ENCODE measurements at regions of chr18 and their contacts with region 1.

Region 1: GRCh38 chr18:22563098-22563707 is 145.5 kb upstream of the CTAGE1 start:
- DNase-seq: peak; percentile 68 to 84 (median 74)
- ATAC-seq: peak; percentile 78
- H3K4me3 ChIP-seq: no peak overlapping the region
- H3K27ac ChIP-seq: no peak overlapping the region
- H3K4me1 ChIP-seq: peaks cover 9 to 16% of the 10 kb centered on the region in 2 experiments
- H3K27me3 ChIP-seq: peaks cover 0 to 6% of the 10 kb centered on the region in 2 experiments; a peak in 2 of 5 replicates
- CTCF ChIP-seq: peak; percentile 85 to 93 (median 88)
- EP300 ChIP-seq: no peak
- POLR2A ChIP-seq: no peak
- RAD21 ChIP-seq: peak; percentile 97 to 100

Region 2: DNA sequence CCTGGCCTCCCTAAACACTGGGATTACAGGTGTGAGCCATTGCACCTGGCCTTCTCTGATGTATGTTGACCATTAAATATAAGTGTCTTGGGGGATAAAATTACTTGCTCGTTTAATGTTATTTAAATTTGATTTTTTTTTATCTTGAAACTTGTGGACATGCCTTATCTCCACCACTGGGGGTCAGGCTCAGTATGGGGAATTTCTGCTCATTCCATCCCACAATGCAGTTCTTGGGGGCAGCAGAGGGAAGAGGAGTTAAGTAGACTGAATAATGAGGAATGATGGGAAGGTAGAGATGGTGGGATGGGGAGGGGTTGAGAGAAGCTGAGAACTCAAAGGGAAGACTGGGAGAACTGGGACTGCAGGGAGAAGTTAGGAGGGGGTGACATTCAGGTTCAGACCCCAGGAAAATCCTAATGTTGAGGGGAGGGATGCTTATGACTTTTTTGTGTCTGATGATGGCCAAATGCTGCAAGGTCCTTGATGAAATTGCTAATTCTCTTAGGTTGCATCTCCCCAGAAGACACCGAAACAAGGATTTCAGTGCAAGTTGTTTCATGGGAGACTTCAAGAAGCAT is 648.4 kb before region 1 on chr18:
- CTCF ChIA-PET with region 1: no interaction called
- POLR2A ChIA-PET with region 1: no interaction called
- in situ Hi-C with region 1: loop called (anchors 25 kb)
- intact Hi-C with region 1: loop called (anchors 5 kb)
- DNase-seq: peak; percentile 26 to 46 (median 36)
- ATAC-seq: peak; percentile 70
- H3K4me3 ChIP-seq: no peak overlapping the region
- H3K27ac ChIP-seq: no peak overlapping the region
- H3K4me1 ChIP-seq: no peaks in the 10 kb centered on the region
- H3K27me3 ChIP-seq: peaks cover 1 to 8% of the 10 kb centered on the region in 2 experiments; a peak in 3 of 5 replicates
- CTCF ChIP-seq: peak; percentile 69 to 77 (median 69)
- EP300 ChIP-seq: no peak
- POLR2A ChIP-seq: no peak
- RAD21 ChIP-seq: peak in 1 of 2 experiments; percentile 74; a peak in 3 of 4 replicates

Region 3: GRCh38 chr18:22279741-22280452 is 283.3 kb before region 1 on chr18:
- CTCF ChIA-PET with region 1: no interaction called
- POLR2A ChIA-PET with region 1: no interaction called
- in situ Hi-C with region 1: no loop called
- intact Hi-C with region 1: no loop called
- DNase-seq: no peak
- ATAC-seq: no peak
- H3K4me3 ChIP-seq: no peak overlapping the region
- H3K27ac ChIP-seq: no peak overlapping the region
- H3K4me1 ChIP-seq: no peaks in the 10 kb centered on the region
- H3K27me3 ChIP-seq: peaks cover 12 to 21% of the 10 kb centered on the region in 2 experiments; a peak in 4 of 5 replicates
- CTCF ChIP-seq: no peak
- EP300 ChIP-seq: no peak
- POLR2A ChIP-seq: no peak
- RAD21 ChIP-seq: no peak

Region 4: DNA sequence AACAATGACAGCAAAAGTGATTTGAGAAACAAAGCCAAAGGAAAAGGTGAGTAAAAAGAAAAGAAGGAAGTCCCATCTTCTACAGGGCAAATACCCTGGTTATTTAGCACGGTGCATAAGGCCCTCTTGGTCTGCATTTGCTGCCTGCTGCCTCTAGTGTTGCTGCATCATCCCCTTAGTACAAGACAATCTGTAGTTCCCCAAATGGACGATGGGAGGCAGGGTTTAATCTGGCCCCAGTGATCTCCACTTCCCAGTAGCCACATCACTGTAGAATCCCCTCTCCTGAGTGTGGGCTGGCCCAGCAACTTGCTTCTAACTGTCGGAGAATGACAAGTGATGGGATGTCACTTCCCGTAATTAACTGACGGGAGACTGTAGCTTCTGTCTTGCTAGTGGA is 230.6 kb before region 1 on chr18:
- CTCF ChIA-PET with region 1: interaction called, 3 read pairs
- POLR2A ChIA-PET with region 1: no interaction called
- in situ Hi-C with region 1: no loop called
- intact Hi-C with region 1: loop called (anchors 1 kb)
- DNase-seq: peak; percentile 55 to 59 (median 55)
- ATAC-seq: peak; percentile 98
- H3K4me3 ChIP-seq: no peak overlapping the region
- H3K27ac ChIP-seq: no peak overlapping the region
- H3K4me1 ChIP-seq: no peaks in the 10 kb centered on the region
- H3K27me3 ChIP-seq: peaks cover 3 to 16% of the 10 kb centered on the region in 2 experiments; a peak in 3 of 5 replicates
- CTCF ChIP-seq: peak; percentile 73 to 97 (median 88)
- EP300 ChIP-seq: no peak
- POLR2A ChIP-seq: no peak
- RAD21 ChIP-seq: peak; percentile 67 to 81

Region 5: GRCh38 chr18:22451796-22452195 is 111.4 kb before region 1 on chr18:
- CTCF ChIA-PET with region 1: no interaction called
- POLR2A ChIA-PET with region 1: no interaction called
- in situ Hi-C with region 1: no loop called
- intact Hi-C with region 1: loop called (anchors 5 kb)
- DNase-seq: peak in 3 of 4 experiments; percentile 32 to 64 (median 40)
- ATAC-seq: peak; percentile 69
- H3K4me3 ChIP-seq: peak overlapping the region; percentile 16
- H3K27ac ChIP-seq: peak overlapping the region; percentile 86
- H3K4me1 ChIP-seq: peaks cover 6 to 16% of the 10 kb centered on the region in 2 experiments; a peak in 3 of 5 replicates
- H3K27me3 ChIP-seq: peaks cover 0 to 1% of the 10 kb centered on the region in 2 experiments; a peak in 1 of 5 replicates
- CTCF ChIP-seq: peak in 1 of 3 experiments; percentile 23; a peak in 1 of 6 replicates
- EP300 ChIP-seq: no peak
- POLR2A ChIP-seq: no peak
- RAD21 ChIP-seq: peak in 1 of 2 experiments; percentile 25; a peak in 1 of 4 replicates

Region 6: GRCh38 chr18:22489704-22490103 is 73.5 kb before region 1 on chr18:
- CTCF ChIA-PET with region 1: no interaction called
- POLR2A ChIA-PET with region 1: no interaction called
- in situ Hi-C with region 1: no loop called
- intact Hi-C with region 1: loop called (anchors 2 kb)
- DNase-seq: peak in 1 of 4 experiments; percentile 13
- ATAC-seq: no peak
- H3K4me3 ChIP-seq: no peak overlapping the region
- H3K27ac ChIP-seq: no peak overlapping the region
- H3K4me1 ChIP-seq: peaks cover 0 to 12% of the 10 kb centered on the region in 2 experiments; a peak in 3 of 5 replicates
- H3K27me3 ChIP-seq: no peaks in the 10 kb centered on the region
- CTCF ChIP-seq: no peak
- EP300 ChIP-seq: no peak
- POLR2A ChIP-seq: no peak
- RAD21 ChIP-seq: no peak

Region 7: DNA sequence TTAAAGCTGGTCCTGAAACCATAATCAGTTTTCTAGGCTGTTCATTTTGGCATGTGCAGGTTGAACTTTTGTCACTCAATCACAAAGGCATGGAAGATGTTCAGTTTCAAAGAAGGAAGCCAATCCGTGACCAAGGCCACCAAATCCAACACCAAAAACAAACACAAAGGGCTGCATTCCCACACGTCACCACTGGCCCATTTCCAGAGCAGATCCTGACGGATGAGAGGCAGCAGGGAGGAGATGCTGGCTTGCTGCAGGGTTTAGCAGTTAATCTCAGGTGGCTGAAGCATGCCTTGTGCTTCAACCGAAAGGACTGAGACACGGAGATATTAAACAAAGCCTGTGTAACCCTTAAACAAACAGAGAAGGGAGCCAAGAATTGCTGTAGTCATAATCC is 46.4 kb after region 1 on chr18:
- CTCF ChIA-PET with region 1: no interaction called
- POLR2A ChIA-PET with region 1: no interaction called
- in situ Hi-C with region 1: no loop called
- intact Hi-C with region 1: no loop called
- DNase-seq: peak in 1 of 4 experiments; percentile 15
- ATAC-seq: no peak
- H3K4me3 ChIP-seq: no peak overlapping the region
- H3K27ac ChIP-seq: no peak overlapping the region
- H3K4me1 ChIP-seq: no peaks in the 10 kb centered on the region
- H3K27me3 ChIP-seq: peaks cover 22 to 26% of the 10 kb centered on the region in 2 experiments
- CTCF ChIP-seq: no peak
- EP300 ChIP-seq: no peak
- POLR2A ChIP-seq: no peak
- RAD21 ChIP-seq: no peak

Region 8: DNA sequence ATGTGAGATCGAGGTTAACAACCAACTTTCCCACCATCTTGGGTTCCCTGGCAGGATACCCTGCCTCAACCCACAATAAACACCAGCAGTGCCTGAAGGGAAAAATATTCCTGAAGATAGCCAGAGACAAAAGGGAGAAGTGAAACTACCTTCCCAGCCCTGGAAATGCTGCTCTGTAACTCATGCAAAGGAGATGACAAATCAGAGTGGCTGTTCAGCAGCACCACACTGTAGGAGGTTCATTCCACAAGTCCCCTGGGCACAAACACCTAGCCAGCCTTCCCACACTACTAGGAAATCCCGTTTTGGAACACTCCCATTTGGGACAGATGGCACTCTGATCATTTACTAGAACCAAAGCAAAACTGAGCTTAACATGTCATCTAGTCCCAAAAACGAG is 179.2 kb after region 1 on chr18:
- CTCF ChIA-PET with region 1: no interaction called
- POLR2A ChIA-PET with region 1: no interaction called
- in situ Hi-C with region 1: no loop called
- intact Hi-C with region 1: no loop called
- DNase-seq: no peak
- ATAC-seq: no peak
- H3K4me3 ChIP-seq: no peak overlapping the region
- H3K27ac ChIP-seq: no peak overlapping the region
- H3K4me1 ChIP-seq: no peaks in the 10 kb centered on the region
- H3K27me3 ChIP-seq: no peaks in the 10 kb centered on the region
- CTCF ChIP-seq: no peak
- EP300 ChIP-seq: no peak
- POLR2A ChIP-seq: no peak
- RAD21 ChIP-seq: no peak

Region 9: GRCh38 chr18:23183411-23184155 is 620.4 kb after region 1 on chr18:
- CTCF ChIA-PET with region 1: no interaction called
- POLR2A ChIA-PET with region 1: no interaction called
- in situ Hi-C with region 1: no loop called
- intact Hi-C with region 1: no loop called
- DNase-seq: no peak
- ATAC-seq: no peak
- H3K4me3 ChIP-seq: no peak overlapping the region
- H3K27ac ChIP-seq: no peak overlapping the region
- H3K4me1 ChIP-seq: no peaks in the 10 kb centered on the region
- H3K27me3 ChIP-seq: peaks cover 45 to 63% of the 10 kb centered on the region in 2 experiments
- CTCF ChIP-seq: no peak
- EP300 ChIP-seq: no peak
- POLR2A ChIP-seq: no peak
- RAD21 ChIP-seq: no peak